Psoas muscle (tissue), 8 donors: ENCODE measurements at regions of chr2 and their contacts with region 1.

Region 1: DNA sequence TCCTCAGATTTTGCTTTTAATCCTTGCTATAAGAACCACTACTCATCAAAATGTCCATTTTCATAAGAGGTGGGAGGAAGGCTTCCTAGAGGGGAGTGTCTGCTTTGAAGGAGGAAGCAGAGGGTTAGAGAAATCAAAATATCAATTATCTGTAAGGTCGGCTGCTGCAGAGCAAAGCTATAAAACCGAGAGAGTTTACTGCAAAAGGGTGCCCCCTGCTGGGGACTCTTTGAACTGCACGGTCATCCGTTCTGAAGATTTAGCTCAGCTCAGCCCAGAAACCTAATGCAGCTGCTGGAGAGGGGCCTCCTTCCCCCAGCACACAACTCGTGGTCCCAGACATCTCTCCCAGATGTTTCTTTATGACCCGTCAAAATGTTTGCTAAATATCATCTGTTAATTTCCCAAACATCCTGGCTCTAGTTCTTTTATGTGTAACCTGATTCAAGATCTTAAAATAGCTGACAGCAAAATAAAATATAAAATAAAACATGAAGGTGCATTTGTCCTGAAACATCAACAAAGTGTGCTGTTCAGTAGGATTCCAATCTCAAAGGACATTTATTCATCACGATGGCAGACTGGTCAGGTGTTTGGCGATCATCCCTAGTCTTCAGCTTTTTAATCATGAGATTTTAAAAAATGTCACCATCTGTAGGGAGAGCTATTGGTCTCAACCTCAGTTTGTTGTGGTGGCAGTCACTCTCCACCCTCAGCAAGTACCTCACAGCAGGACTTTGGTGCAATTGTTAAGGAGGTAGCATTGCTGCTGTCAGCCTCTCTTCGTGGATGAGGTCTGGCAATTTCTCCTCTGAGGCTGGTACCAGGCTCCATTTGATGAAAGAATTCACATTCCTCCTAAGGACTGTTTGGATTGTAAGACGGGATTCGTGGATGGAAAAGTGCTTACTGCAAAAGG is 185.9 kb downstream of the MTX2 start:
- DNase-seq: peak; percentile 77 to 88
- ATAC-seq: peak; percentile 64 to 89 (median 84)
- H3K4me3 ChIP-seq: no peak overlapping the region
- H3K27ac ChIP-seq: peak overlapping the region; percentile 19
- H3K4me1 ChIP-seq: peaks cover 3% of the 10 kb centered on the region
- H3K27me3 ChIP-seq: no peaks in the 10 kb centered on the region
- CTCF ChIP-seq: peak; percentile 98

Region 2: GRCh38 chr2:176554101-176555048 is 99.2 kb after region 1 on chr2:
- intact Hi-C with region 1: loop called (anchors 2 to 10 kb)
- DNase-seq: no peak
- ATAC-seq: peak; percentile 61 to 91 (median 84)
- H3K4me3 ChIP-seq: peak overlapping the region; percentile 74
- H3K27ac ChIP-seq: peak overlapping the region; percentile 57
- H3K4me1 ChIP-seq: peaks cover 12% of the 10 kb centered on the region
- H3K27me3 ChIP-seq: no peaks in the 10 kb centered on the region
- CTCF ChIP-seq: peak; percentile 82

Region 3: GRCh38 chr2:176638167-176639015 is 183.2 kb after region 1 on chr2:
- intact Hi-C with region 1: loop called (anchors 5 kb)
- DNase-seq: peak; percentile 77 to 83
- ATAC-seq: peak; percentile 89 to 98 (median 92)
- H3K4me3 ChIP-seq: peak overlapping the region; percentile 87
- H3K27ac ChIP-seq: peak overlapping the region; percentile 39
- H3K4me1 ChIP-seq: no peaks in the 10 kb centered on the region
- H3K27me3 ChIP-seq: peaks cover 0 to 16% (median 0%) of the 10 kb centered on the region in 3 donors
- CTCF ChIP-seq: peak; percentile 88